BJ (cell line): ENCODE measurements at regions of chr15 and their contacts with region 1.

Region 1: DNA sequence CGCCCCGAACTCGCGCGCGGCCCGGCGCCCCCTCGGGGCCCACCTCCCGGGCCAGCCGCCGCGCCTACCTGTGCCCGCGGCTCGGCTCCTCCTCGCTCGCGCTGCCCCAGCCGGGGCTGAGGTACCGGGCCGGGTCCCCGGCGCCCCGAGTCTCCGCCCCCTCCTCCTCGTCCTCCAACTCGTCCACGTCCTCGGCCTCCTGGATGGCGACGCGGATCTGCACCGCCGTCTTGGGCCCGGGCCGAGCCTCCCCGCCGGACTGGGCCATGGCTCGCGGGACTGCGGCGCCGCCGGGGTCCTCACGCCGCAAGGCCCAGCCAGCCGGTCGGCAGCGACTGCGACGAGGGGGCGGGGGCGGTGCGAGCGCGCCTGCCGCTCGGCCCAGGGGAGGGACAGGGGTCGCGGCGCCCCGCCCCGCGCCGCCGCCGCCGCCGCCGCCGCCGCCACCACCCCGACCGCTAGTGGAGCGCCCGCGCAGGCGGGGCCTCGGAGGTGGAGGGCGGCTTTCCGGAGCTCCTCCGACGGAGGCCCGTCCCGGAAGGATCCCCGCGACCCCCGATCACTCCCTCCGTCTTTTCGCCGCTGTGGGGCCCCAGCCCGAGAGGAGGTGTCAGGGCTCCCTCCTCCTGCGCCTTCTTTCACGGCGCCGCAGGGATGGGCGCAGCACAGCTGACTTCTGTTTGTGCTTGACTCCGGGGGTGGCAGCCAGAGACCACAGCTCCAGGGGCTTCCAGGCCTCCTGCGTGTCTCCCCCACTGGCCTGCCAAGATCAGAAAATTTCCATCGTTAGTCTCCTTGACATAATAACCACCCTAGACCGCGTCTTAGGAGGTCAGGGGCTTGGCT is at the start of gene LARP6:
- DNase-seq: no peak
- H3K4me3 ChIP-seq: peak within 1 kb of the TSS; percentile 80
- H3K27me3 ChIP-seq: no peaks in the 10 kb centered on the region
- CTCF ChIP-seq: no peak
- polyA plus RNA-seq, gene LARP6: 108 and 135 TPM in 2 replicates

Region 2: DNA sequence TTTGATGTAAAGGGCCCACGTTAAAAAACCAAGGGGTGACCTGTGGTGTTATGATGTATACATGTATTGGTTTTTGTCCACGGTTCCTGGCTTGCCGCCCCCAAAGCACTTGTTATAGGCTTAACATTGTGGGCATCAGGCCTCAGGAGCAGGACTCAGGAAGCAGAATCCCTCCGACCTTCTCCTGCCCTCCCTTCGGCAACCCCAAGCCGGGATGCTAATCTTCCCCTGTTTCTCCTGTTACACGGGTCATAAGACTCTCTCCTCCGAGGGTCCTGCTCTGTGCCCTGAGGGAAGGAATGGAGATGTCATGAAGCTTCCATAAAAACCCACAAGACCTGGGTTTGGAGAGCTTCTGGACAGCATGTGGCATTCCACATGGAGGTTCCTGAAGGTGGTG is 1352.6 kb before region 1 on chr15:
- CTCF ChIA-PET with region 1: no interaction called
- POLR2A ChIA-PET with region 1: interaction called, 14 read pairs
- DNase-seq: no peak
- H3K4me3 ChIP-seq: no peak overlapping the region
- H3K27me3 ChIP-seq: peaks cover 6% of the 10 kb centered on the region
- CTCF ChIP-seq: no peak

Region 3: DNA sequence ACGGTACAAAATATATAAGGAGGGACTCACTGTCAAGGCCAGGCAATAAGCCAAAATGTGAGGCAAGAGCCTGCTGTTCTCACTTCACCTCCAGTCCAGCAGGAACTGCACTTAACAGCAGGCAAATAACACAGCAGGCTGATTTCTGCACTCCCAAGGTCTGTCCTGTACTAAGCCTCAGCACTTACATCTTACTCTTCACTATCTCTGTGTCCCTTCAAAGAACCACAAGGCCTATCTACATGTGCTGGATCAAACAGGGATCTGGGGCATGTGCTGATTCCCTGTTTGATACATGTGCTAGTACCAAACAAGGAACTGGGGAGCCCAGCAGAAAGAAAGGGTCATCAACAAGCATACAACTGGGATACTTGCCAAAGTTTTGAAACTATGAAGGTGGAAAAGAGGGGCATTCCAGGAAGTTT is 112.9 kb before region 1 on chr15:
- CTCF ChIA-PET with region 1: no interaction called
- POLR2A ChIA-PET with region 1: no interaction called
- DNase-seq: no peak
- H3K4me3 ChIP-seq: no peak overlapping the region
- H3K27me3 ChIP-seq: no peaks in the 10 kb centered on the region
- CTCF ChIP-seq: no peak

Region 4: DNA sequence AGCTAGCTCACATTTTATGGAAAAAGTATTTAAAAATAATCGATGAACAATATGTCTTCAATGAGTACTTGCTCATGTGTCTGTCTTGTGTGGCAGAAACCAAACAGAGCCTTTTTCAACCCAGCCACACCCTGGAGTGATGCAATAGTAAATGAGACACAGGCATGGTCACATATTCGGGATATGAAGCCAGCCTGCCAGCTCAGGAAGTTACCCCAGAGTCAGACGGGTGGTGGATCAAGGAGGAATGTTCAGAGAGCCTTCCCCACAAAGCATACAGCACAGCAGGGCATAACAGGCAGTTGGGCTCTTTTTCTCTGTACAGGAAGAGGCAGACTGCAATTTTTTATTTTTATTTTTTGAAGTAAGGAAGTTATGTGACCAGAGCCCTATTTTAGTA is 27.4 kb before region 1 on chr15:
- CTCF ChIA-PET with region 1: interaction called, 10 read pairs
- POLR2A ChIA-PET with region 1: no interaction called
- DNase-seq: peak; percentile 78
- H3K4me3 ChIP-seq: no peak overlapping the region
- H3K27me3 ChIP-seq: no peaks in the 10 kb centered on the region
- CTCF ChIP-seq: no peak

Region 5: DNA sequence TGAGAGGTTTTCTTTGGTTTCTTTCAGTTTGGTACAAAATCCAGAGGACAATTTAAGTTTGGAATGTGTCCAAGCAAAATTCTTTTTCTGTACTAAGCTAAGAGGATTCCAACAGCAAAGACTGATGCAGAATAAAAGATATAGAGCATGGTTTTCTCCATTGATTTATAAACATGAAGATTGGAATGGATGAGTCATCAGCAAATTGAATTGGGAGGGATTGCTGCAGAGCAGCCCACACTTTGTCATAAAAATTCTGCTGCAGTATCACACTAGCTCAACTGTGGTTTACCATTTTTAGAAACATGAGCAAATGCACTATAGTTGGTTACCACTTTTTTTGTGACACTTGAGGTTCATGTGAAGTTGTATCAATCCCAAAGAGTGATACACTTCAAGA is 16.0 kb after region 1 on chr15:
- CTCF ChIA-PET with region 1: interaction called, 35 read pairs
- POLR2A ChIA-PET with region 1: no interaction called
- DNase-seq: no peak
- H3K4me3 ChIP-seq: no peak overlapping the region
- H3K27me3 ChIP-seq: no peaks in the 10 kb centered on the region
- CTCF ChIP-seq: no peak

Region 6: GRCh38 chr15:70875001-70875782 is 21.1 kb after region 1 on chr15:
- CTCF ChIA-PET with region 1: interaction called, 35 read pairs
- POLR2A ChIA-PET with region 1: no interaction called
- DNase-seq: no peak
- H3K4me3 ChIP-seq: no peak overlapping the region
- H3K27me3 ChIP-seq: no peaks in the 10 kb centered on the region
- CTCF ChIP-seq: peak; percentile 77

Region 7: GRCh38 chr15:70964058-70964457 is 110.0 kb after region 1 on chr15:
- CTCF ChIA-PET with region 1: no interaction called
- POLR2A ChIA-PET with region 1: no interaction called
- DNase-seq: no peak
- H3K4me3 ChIP-seq: no peak overlapping the region
- H3K27me3 ChIP-seq: no peaks in the 10 kb centered on the region
- CTCF ChIP-seq: no peak

Region 8: GRCh38 chr15:71055461-71055860 is 201.4 kb after region 1 on chr15:
- CTCF ChIA-PET with region 1: no interaction called
- POLR2A ChIA-PET with region 1: no interaction called
- DNase-seq: no peak
- H3K4me3 ChIP-seq: no peak overlapping the region
- H3K27me3 ChIP-seq: no peaks in the 10 kb centered on the region
- CTCF ChIP-seq: no peak